ENCODE measurements at regions of chr19 and their contacts with region 1.

Region 1: DNA sequence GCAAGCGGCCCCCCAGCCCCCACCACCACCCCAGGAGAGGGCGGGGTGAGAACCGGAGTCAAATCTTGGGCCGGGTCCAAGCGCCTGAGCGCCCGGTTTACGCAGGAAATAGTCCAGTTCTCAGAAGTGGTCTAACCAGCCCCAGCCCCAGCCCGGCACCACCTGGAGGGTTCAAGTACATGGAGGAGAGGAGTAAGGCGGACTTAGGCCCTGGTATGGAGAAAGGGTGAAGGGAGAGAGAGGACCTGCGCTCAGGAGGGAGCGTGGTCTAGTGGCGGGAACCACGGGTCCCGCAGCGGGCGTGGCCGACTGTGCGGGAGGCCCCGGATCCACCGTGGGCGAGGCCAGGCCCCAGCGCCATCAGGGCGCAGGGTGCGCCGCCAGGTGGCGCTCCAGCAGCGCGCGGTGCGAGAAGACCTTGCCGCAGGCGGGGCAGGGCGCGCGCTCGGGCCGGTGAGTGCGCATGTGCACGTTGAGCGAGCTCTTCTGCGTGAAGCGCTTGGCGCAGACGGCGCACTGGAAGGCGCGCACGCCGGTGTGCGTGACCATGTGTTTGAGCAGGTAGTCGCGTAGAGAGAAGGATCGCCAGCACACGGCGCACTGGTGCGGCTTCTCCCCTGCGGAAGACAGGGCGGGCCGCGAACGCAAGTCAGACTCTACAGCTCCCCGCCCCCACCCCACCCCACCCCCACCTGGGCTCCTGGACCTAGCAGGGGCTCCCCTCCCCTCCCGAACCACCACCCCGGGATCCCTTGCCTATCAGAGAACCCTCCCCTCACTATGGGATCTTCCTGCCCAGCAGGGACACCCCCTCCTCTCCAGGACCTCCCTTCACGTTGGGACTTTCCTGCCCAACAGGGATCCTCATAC is 2.1 kb upstream of the SLC27A5 start:
- DNase-seq: peak; percentile 86
- ATAC-seq: peak; percentile 85
- H3K4me3 ChIP-seq: peak overlapping the region; percentile 78 to 91
- H3K27ac ChIP-seq: peak overlapping the region; percentile 80
- H3K4me1 ChIP-seq: peaks cover 11 to 32% of the 10 kb centered on the region in 2 experiments
- H3K27me3 ChIP-seq: no peaks in the 10 kb centered on the region
- CTCF ChIP-seq: peak; percentile 58 to 94 (median 84)
- POLR2A ChIP-seq: peak; percentile 77
- RAD21 ChIP-seq: peak; percentile 73

Region 2: GRCh38 chr19:58218899-58219298 is 295.0 kb before region 1 on chr19:
- CTCF ChIA-PET with region 1: no interaction called
- POLR2A ChIA-PET with region 1: no interaction called
- RAD21 ChIA-PET with region 1: interaction called in 1 of 2 experiments, 10 read pairs
- intact Hi-C with region 1: loop called (anchors 5 kb)
- DNase-seq: peak; percentile 40
- ATAC-seq: peak; percentile 91
- H3K4me3 ChIP-seq: no peak overlapping the region
- H3K27ac ChIP-seq: no peak overlapping the region
- H3K4me1 ChIP-seq: no peaks in the 10 kb centered on the region
- H3K27me3 ChIP-seq: no peaks in the 10 kb centered on the region
- CTCF ChIP-seq: peak; percentile 16 to 58 (median 36); a peak in 5 of 6 replicates
- POLR2A ChIP-seq: no peak
- RAD21 ChIP-seq: peak; percentile 62

Region 3: DNA sequence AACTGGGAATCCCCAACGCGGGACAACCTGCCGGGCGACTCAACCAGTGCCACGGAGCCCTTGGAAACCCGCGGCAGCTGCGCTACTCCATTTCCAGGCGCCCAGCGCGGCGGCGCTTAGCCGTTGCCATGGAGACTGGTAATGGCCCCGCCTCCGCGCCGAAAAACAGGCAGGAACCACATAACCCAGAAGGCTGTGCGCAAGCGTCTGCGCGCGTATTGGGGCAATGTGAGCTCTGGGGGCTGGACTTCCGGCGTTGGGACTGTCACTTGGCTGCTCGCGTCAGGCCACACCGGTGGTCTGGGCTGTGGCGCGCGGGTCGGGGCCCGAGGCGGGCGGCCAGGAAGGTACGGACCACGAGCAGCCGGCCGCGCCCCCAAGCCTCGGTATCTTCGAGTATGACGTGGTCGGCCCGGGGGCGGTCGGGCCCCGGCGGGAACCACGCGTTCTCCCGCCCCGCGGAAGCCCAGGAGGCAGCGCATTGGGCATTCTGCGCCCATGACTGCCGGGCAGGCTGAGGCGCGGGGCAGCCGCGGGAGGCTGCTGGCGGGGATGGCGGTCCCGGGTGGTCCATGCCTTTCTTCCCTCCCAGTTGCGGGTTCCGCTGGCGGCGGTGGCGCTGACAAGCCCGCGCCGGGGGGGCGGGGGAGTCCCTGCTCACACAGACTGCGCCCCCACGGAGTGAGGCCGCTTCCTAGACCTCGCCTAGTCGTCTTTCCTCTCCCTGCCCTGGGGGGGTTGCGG is 62.4 kb before region 1 on chr19 and contains the start of gene ZNF324B:
- CTCF ChIA-PET with region 1: no interaction called
- POLR2A ChIA-PET with region 1: no interaction called
- RAD21 ChIA-PET with region 1: no interaction called
- intact Hi-C with region 1: no loop called
- DNase-seq: peak; percentile 90
- ATAC-seq: peak; percentile 94
- H3K4me3 ChIP-seq: peak within 1 kb of the TSS; percentile 62 to 73
- H3K27ac ChIP-seq: peak within 1 kb of the TSS; percentile 66; the same call in 1 of the 2 replicates
- H3K4me1 ChIP-seq: peaks cover 6 to 10% of the 10 kb centered on the region in 2 experiments; a peak in 2 of 4 replicates
- H3K27me3 ChIP-seq: no peaks in the 10 kb centered on the region
- CTCF ChIP-seq: no peak
- POLR2A ChIP-seq: no peak
- RAD21 ChIP-seq: no peak
- total RNA-seq, gene ZNF324B: 9.4 TPM

Region 4: GRCh38 chr19:58543826-58544590 is 30.1 kb after region 1 on chr19 and contains the start of gene TRIM28:
- CTCF ChIA-PET with region 1: interaction called, 11 read pairs
- POLR2A ChIA-PET with region 1: interaction called, 31 read pairs
- RAD21 ChIA-PET with region 1: no interaction called
- intact Hi-C with region 1: loop called (anchors 1 kb)
- DNase-seq: peak; percentile 96
- ATAC-seq: peak; percentile 92
- H3K4me3 ChIP-seq: peak within 1 kb of the TSS; percentile 90 to 94
- H3K27ac ChIP-seq: peak within 1 kb of the TSS; percentile 77
- H3K4me1 ChIP-seq: peaks cover 14 to 27% of the 10 kb centered on the region in 2 experiments
- H3K27me3 ChIP-seq: peaks cover 10% of the 10 kb centered on the region; the same call in 1 of the 2 replicates
- CTCF ChIP-seq: no peak
- POLR2A ChIP-seq: peak; percentile 88
- RAD21 ChIP-seq: no peak
- total RNA-seq, gene TRIM28: 908 TPM

Region 5: DNA sequence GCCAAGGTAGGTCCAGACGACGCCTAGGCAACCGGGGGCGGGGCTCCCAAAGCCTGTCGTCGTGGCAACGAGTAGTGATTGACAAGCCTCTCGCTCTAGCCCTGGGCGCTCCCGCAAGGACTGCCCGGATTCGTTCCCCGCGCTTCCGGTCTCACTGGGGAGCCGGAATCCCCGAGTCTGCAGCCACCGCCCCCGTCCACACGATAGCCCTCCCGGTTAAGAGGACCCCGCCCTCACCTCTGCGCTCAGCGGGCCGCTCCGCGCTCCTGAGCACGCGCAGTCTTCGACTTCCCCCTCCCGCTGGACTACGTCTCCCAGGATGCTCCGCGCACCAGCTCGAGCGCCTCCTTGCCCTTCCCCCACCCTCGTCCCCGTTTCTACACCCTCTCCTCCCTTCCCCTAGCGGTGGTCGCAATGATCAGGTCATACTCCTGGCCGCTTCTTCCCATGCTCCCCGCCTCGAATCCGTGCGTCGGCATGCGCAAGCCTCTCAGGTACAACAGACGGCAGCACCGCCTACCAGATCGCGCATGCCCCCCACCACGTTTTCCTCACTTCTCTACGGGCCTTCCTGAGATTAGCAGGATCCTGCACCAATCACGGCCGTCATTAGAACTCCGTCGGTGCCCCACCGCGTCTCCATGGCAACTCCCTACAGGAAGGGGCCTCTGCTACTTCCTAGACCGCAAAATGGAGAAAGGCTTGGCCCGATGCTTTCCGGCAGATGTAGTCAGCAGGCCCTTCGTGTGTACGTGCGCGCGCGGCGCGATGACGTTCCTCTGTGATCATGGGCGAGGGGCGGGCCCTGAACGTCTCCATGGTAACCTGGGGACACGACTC is 59.1 kb after region 1 on chr19 and contains the start of gene MZF1:
- CTCF ChIA-PET with region 1: interaction called, 4 read pairs
- POLR2A ChIA-PET with region 1: interaction called, 10 read pairs
- RAD21 ChIA-PET with region 1: no interaction called
- intact Hi-C with region 1: no loop called
- DNase-seq: peak; percentile 100
- ATAC-seq: peak; percentile 70
- H3K4me3 ChIP-seq: peak within 1 kb of the TSS; percentile 78 to 86
- H3K27ac ChIP-seq: peak within 1 kb of the TSS; percentile 91
- H3K4me1 ChIP-seq: peaks cover 12 to 28% of the 10 kb centered on the region in 2 experiments
- H3K27me3 ChIP-seq: no peaks in the 10 kb centered on the region
- CTCF ChIP-seq: no peak
- POLR2A ChIP-seq: no peak
- RAD21 ChIP-seq: no peak
- total RNA-seq, gene MZF1: 33.0 TPM